Dorsolateral prefrontal cortex (tissue), 120 donors: ENCODE measurements at regions of chr10 and their contacts with region 1.

Region 1: GRCh38 chr10:78302989-78303854 is 269.6 kb downstream of the RPS24 start:
- DNase-seq: peak; percentile 79 to 95 (median 90)
- H3K4me3 ChIP-seq: peak overlapping the region; percentile 36 to 78 (median 65)
- H3K27ac ChIP-seq: peak overlapping the region; percentile 70 to 99 (median 96)
- H3K27me3 ChIP-seq: no peaks in the 10 kb centered on the region
- CTCF ChIP-seq: peak; percentile 14 to 73 (median 57)

Region 2: GRCh38 chr10:78211561-78212051 is 91.6 kb before region 1 on chr10:
- intact Hi-C with region 1: loop called (anchors 2 to 5 kb)
- DNase-seq: peak in 9 of 10 donors; percentile 25 to 84 (median 67)
- H3K4me3 ChIP-seq: no peak overlapping the region
- H3K27ac ChIP-seq: peak overlapping the region in 10 of 59 donors; percentile 6 to 51 (median 28)
- H3K27me3 ChIP-seq: no peaks in the 10 kb centered on the region
- CTCF ChIP-seq: peak in 55 of 56 donors; percentile 38 to 85 (median 70)

Region 3: GRCh38 chr10:78579995-78580394 is 276.8 kb after region 1 on chr10:
- intact Hi-C with region 1: loop called in 1 of 2 experiments (anchors 10 kb)
- DNase-seq: peak; percentile 82 to 94 (median 87)
- H3K4me3 ChIP-seq: no peak overlapping the region
- H3K27ac ChIP-seq: peak overlapping the region in 53 of 59 donors; percentile 13 to 88 (median 67)
- H3K27me3 ChIP-seq: no peaks in the 10 kb centered on the region
- CTCF ChIP-seq: peak in 13 of 56 donors; percentile 8 to 50 (median 14)

Region 4: DNA sequence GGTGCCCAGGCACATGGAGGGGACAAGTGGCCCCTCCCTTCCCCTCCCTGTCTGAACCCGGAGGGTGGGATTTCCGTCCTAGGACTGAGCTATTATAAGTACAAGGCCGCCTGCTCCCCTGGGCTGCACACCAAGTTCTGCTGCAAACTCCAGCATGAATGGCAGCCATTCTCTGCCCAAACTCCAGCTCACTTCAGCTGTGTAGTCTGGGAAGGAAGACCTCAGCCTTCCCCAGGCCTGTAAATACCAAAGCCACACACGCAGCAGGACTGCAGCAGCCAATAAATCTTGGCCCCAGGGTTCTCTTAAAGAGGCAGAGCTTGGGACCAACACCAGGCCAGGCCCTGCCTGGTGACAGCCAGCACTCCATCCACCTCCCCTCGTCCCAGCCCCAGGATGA is 474.2 kb after region 1 on chr10:
- intact Hi-C with region 1: loop called in 1 of 2 experiments (anchors 5 kb)
- DNase-seq: peak; percentile 19 to 89 (median 80)
- H3K4me3 ChIP-seq: no peak overlapping the region
- H3K27ac ChIP-seq: peak overlapping the region in 57 of 59 donors; percentile 3 to 92 (median 73)
- H3K27me3 ChIP-seq: no peaks in the 10 kb centered on the region
- CTCF ChIP-seq: peak in 13 of 56 donors; percentile 6 to 43 (median 11)